SK-N-SH (cell line): ENCODE measurements at regions of chr2 and their contacts with region 1.

Region 1: DNA sequence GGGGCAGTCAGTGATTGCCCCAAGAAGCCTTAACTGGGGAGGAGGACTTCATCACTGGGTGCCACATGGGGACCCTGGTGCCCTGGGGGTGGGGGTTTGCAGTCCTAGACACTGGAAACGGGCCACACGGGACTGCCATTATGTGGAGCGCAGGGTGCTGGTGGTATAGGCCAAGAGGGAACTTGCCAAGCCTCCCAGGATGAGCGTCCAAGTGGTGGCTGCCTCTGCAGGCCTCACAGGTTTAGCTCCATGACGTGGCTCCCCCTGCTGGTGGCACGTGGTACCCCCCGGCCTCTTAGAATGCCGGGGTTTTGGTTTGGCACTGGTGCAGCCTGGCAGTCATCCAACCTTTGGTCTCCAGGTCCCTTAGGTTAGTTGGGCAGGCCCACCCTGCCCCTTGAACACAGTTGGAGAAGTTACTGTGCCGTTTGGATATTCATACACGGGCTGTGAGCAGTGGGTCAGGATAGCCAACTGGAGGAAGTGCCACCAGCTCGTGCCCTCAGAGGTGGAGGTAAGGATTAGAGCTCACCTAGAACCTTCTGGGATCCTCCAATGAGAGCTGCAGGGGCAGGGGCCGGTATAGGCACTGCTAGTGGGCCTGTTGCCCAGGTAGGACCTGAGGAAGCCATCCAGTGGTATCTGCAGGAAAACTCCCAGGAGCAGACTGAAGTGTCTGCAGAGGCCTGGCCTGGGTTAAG is 5.6 kb downstream of the PTMA start:
- DNase-seq: peak; percentile 88
- H3K4me3 ChIP-seq: no peak overlapping the region
- H3K27ac ChIP-seq: peak overlapping the region; percentile 50 to 56
- H3K4me1 ChIP-seq: peaks cover 20 to 32% of the 10 kb centered on the region in 2 experiments; a peak in 3 of 4 replicates
- H3K27me3 ChIP-seq: no peaks in the 10 kb centered on the region
- CTCF ChIP-seq: peak; percentile 95
- EP300 ChIP-seq: no peak; a peak in 1 of 4 replicates
- RAD21 ChIP-seq: peak; percentile 61

Region 2: DNA sequence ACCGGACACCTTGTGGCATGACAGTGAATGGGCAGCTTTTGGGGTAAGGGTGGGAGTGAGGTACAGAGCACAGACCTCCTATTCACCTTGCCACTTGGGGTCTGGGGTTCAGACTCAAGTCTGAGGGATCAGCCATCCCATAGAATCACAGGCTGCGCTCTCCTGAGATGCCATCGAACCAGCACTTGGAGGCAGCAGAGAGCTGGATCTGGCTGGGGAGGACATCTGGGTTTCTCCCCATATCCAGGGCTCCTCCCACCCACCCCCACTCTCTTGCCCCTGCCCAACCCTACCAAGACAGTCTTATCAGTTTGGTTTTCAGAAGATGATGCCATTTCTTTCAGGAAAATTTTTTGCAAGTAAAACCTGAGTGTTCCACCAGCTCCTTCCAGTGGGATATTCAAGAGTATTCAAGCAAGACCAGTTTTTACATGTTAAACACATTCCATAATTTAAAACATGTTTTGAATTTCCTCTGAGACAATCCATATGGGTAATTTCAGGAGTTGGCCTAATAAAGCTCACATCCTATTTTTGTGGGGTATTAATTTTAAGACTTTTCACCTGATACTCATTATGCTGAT is 150.4 kb before region 1 on chr2:
- CTCF ChIA-PET with region 1: interaction called, 50 read pairs
- POLR2A ChIA-PET with region 1: interaction called, 3 read pairs
- DNase-seq: peak; percentile 88
- H3K4me3 ChIP-seq: no peak overlapping the region; a peak in 1 of 4 replicates
- H3K27ac ChIP-seq: no peak overlapping the region
- H3K4me1 ChIP-seq: peaks cover 0 to 4% of the 10 kb centered on the region in 2 experiments; a peak in 1 of 4 replicates
- H3K27me3 ChIP-seq: no peaks in the 10 kb centered on the region
- CTCF ChIP-seq: peak; percentile 60
- EP300 ChIP-seq: no peak
- RAD21 ChIP-seq: peak; percentile 83

Region 3: DNA sequence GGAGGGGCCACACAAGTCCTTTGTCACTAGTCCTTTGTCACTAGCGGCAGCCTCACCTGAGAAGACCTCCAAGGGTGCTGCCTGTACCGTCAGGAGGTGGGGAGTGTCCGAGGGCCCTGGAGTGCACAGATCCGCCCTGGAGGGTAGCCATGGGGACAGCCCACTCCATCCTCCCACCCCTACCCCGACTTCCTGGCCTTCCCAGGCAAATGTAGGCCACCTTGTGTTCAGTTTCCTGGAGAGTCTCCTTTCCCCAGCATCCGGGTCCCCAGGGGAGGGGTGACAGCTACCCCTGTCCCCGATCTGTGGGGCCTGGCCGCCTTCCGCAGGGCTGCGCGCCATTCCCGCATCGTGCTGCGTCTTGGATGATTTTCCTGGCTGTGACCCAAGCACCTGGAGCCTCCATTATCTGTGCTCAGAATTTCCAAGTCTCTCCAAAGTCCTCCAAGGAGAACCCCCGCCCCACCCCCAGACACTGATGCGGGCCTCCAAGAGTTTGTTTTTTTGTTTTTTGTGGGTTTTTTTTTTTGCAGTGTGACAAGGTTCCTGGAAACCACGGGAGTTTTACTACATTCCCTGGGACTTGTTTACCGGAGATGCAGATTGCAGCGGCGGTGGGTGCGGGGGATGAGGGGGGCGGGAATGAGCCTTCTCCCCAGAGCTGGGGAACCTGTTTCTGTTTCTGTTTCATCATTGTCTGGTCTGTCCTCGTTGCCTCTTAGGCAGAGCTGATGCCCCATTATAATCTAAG is 92.6 kb before region 1 on chr2:
- CTCF ChIA-PET with region 1: interaction called, 15 read pairs
- POLR2A ChIA-PET with region 1: no interaction called
- DNase-seq: no peak
- H3K4me3 ChIP-seq: no peak overlapping the region
- H3K27ac ChIP-seq: no peak overlapping the region
- H3K4me1 ChIP-seq: no peaks in the 10 kb centered on the region
- H3K27me3 ChIP-seq: no peaks in the 10 kb centered on the region
- CTCF ChIP-seq: no peak
- EP300 ChIP-seq: no peak
- RAD21 ChIP-seq: no peak

Region 4: GRCh38 chr2:231662028-231662810 is 51.7 kb before region 1 on chr2:
- CTCF ChIA-PET with region 1: interaction called, 37 read pairs
- POLR2A ChIA-PET with region 1: interaction called, 3 read pairs
- DNase-seq: peak; percentile 38
- H3K4me3 ChIP-seq: no peak overlapping the region
- H3K27ac ChIP-seq: no peak overlapping the region
- H3K4me1 ChIP-seq: peaks cover 6 to 9% of the 10 kb centered on the region in 2 experiments; a peak in 2 of 4 replicates
- H3K27me3 ChIP-seq: no peaks in the 10 kb centered on the region
- CTCF ChIP-seq: no peak
- EP300 ChIP-seq: no peak
- RAD21 ChIP-seq: no peak

Region 5: DNA sequence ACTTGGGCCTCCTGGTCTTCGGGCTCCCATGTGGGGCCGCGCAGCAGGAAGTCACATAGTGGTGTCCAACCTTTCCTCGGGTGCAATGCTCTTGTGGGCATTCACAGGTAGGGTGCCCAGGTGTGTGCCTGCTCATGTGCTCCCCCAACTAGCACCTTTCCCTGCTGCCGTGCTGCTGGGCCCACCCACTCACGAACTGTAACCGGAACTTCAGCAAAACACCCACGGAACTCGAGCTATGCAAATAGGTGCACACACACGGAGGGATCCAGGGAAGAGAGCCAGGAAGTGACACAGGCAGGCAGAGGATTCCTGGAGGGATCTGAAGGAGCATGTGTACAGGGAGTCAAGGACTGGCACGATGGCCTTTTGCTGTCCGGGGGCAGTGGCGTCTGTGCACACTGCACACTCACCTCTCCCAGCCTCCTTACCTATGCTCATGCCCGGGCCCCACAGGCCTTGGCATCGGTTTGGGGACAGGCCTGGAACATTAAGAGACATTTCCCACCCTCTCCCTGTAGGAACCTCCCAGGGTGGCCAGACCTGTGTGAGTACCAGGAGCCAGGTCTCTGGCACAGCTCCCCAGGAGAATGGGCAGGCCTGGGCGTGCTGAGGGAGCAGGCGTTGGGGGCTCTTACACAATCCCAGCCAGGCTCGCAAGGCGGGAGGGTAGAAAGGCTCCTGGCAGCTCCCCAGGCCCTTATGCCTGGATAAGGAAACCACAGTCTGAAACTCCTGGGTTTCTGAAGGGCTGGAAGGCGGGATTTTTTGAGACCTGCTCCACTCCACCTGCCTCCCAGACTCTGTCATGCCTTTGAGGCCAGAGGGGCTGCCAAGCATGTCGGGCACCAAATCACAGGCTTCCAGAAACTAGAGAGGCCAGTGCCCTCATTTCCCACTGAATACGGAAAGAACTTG is 12.2 kb before region 1 on chr2:
- CTCF ChIA-PET with region 1: interaction called, 1,218 read pairs
- POLR2A ChIA-PET with region 1: interaction called, 6 read pairs
- DNase-seq: no peak
- H3K4me3 ChIP-seq: no peak overlapping the region
- H3K27ac ChIP-seq: no peak overlapping the region
- H3K4me1 ChIP-seq: peaks cover 0 to 7% of the 10 kb centered on the region in 2 experiments; a peak in 1 of 4 replicates
- H3K27me3 ChIP-seq: no peaks in the 10 kb centered on the region
- CTCF ChIP-seq: no peak
- EP300 ChIP-seq: no peak
- RAD21 ChIP-seq: no peak

Region 6: GRCh38 chr2:231737761-231738160 is 23.9 kb after region 1 on chr2:
- CTCF ChIA-PET with region 1: interaction called, 29 read pairs
- POLR2A ChIA-PET with region 1: interaction called, 5 read pairs
- DNase-seq: no peak
- H3K4me3 ChIP-seq: no peak overlapping the region
- H3K27ac ChIP-seq: no peak overlapping the region
- H3K4me1 ChIP-seq: no peaks in the 10 kb centered on the region
- H3K27me3 ChIP-seq: no peaks in the 10 kb centered on the region
- CTCF ChIP-seq: no peak
- EP300 ChIP-seq: no peak
- RAD21 ChIP-seq: no peak